Endothelial cell of umbilical vein (primary cell): ENCODE measurements at regions of chr9 and their contacts with region 1.

Region 1: DNA sequence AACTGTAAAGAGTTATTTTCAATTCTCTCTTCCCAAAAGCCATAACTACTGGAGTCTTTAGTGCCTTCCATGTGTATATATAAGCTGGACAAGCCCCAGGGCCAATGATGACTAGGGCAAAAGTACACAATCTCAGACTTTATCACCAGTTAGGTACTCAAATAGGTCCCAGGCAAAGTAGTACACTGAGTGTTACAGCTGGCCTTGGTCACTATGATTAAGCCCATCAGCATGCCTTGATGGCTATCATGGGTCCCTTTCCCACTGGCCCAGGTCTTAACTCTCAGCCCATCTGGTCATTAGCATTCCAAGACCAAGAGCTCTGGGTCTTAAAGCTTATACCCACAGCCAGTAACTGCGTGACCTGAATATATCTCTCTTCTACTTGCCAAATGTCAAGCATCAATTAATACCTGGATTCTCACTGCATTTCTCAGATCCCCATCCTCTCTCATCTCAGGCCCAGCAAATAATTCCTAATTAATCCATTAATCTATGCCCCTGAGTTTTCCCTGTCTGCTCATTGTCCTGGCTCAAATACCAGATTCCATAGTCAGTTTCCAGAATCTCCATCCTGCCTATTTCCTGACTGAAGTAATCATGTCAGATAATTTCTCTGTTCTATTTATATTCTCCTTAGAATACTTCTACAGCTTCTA is 62.3 kb downstream of the NR6A1 start:
- DNase-seq: peak; percentile 14
- H3K4me3 ChIP-seq: no peak overlapping the region
- H3K27ac ChIP-seq: no peak overlapping the region
- H3K4me1 ChIP-seq: peaks cover 9% of the 10 kb centered on the region
- H3K27me3 ChIP-seq: no peaks in the 10 kb centered on the region
- CTCF ChIP-seq: no peak
- POLR2A ChIP-seq: no peak

Region 2: DNA sequence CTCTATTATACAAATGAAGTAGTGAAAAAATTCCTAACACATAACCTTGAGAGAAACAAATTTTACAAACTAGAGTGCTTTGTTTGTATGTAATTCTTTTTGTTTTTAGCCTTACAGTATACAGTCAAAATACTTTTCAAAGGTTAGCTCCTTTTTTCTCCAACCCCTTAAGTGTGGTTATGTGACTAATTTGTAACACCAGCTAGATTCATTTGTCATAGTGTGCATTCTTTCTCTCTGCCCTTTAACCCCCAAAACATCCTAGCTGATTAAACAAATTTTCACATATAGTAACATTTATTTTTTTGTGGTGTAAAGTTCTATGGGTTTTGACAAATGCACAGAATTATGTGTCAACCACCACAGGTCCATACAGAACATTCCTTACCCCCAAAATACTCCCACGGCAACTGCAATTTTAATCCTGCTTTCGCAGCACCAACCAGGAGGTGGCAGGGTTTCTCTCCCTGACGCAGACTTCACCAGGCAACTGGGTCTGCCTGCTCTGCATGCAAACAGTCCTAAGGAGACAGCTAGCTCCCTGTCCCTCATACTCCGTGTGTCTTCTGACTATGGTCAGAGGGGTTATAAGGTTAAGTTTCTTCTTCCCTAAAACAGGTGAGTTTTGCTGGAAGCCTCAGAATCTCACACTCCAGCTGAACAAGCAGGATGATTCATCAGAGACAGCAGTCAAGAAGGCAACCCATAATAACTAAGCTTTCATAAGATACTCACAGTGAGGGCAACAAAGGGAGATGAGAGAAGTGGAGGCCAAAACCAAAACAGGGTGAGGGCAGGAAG is 157.1 kb before region 1 on chr9:
- CTCF ChIA-PET with region 1: interaction called, 14 read pairs
- POLR2A ChIA-PET with region 1: no interaction called
- dilution Hi-C with region 1: no loop called
- intact Hi-C with region 1: loop called (anchors 1 kb)
- DNase-seq: peak; percentile 59
- H3K4me3 ChIP-seq: no peak overlapping the region
- H3K27ac ChIP-seq: no peak overlapping the region
- H3K4me1 ChIP-seq: no peaks in the 10 kb centered on the region
- H3K27me3 ChIP-seq: peaks cover 11 to 13% of the 10 kb centered on the region in 2 experiments
- CTCF ChIP-seq: peak; percentile 61 to 62
- POLR2A ChIP-seq: no peak

Region 3: GRCh38 chr9:124658165-124659017 is 50.4 kb before region 1 on chr9:
- CTCF ChIA-PET with region 1: interaction called, 37 read pairs
- POLR2A ChIA-PET with region 1: no interaction called
- dilution Hi-C with region 1: no loop called
- intact Hi-C with region 1: loop called (anchors 1 kb)
- DNase-seq: peak; percentile 95
- H3K4me3 ChIP-seq: peak overlapping the region; percentile 53 to 100 (median 99)
- H3K27ac ChIP-seq: peak overlapping the region; percentile 98
- H3K4me1 ChIP-seq: peaks cover 33% of the 10 kb centered on the region
- H3K27me3 ChIP-seq: no peaks in the 10 kb centered on the region
- CTCF ChIP-seq: no peak
- POLR2A ChIP-seq: peak; percentile 99

Region 4: GRCh38 chr9:124721109-124721906 is 12.5 kb after region 1 on chr9:
- CTCF ChIA-PET with region 1: interaction called, 10 read pairs
- POLR2A ChIA-PET with region 1: no interaction called
- dilution Hi-C with region 1: no loop called
- intact Hi-C with region 1: no loop called
- DNase-seq: no peak
- H3K4me3 ChIP-seq: no peak overlapping the region
- H3K27ac ChIP-seq: no peak overlapping the region
- H3K4me1 ChIP-seq: no peaks in the 10 kb centered on the region
- H3K27me3 ChIP-seq: no peaks in the 10 kb centered on the region
- CTCF ChIP-seq: no peak
- POLR2A ChIP-seq: no peak

Region 5: DNA sequence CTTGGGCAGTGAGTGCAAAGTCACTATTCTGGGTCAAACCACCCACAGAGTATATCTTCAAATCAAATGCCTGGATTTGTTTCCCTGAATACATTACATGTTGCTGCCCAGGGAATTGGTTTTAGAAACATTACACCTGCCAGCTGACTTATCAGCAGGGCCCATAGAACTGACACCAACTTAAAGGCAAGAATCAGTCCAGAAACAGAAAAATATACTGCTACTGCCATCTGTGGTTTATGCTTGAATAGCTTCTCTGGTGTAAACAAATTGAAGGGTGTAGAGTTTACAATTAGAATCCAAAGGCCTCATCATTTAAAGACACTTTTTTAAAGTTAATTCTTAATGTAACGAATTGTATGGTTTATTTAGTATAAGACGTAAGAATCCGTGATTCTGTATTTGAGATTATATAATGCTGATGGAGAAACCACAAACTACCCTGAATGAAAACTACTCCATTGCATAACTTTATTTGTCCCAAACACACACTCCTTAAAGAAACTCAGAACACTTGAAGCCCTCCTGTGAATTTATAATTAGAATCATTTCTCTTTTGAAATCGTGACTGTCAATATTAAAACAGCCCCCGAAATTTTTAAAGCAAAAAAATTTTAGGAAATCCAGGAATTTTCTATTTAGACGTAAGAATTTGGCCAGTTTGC is 56.1 kb after region 1 on chr9:
- CTCF ChIA-PET with region 1: interaction called, 20 read pairs
- POLR2A ChIA-PET with region 1: no interaction called
- dilution Hi-C with region 1: no loop called
- intact Hi-C with region 1: loop called (anchors 1 kb)
- DNase-seq: peak; percentile 47
- H3K4me3 ChIP-seq: no peak overlapping the region
- H3K27ac ChIP-seq: no peak overlapping the region
- H3K4me1 ChIP-seq: peaks cover 5% of the 10 kb centered on the region
- H3K27me3 ChIP-seq: peaks cover 57 to 91% of the 10 kb centered on the region in 2 experiments
- CTCF ChIP-seq: peak in 1 of 2 donors; percentile 19
- POLR2A ChIP-seq: no peak